Activated T-helper 2 cell treated with anti-CD3 and anti-CD28 coated beads, Interferon-gamma antibody, Interleukin-2, Interleukin-4, amounts not matched to agents 10 μg/mL and 5 μg/mL and 100 μg/mL, durations not matched to agents 14 hours and 24 hours and 36 hours (primary cell): ENCODE measurements at regions of chr22 and their contacts with region 1.

Region 1: DNA sequence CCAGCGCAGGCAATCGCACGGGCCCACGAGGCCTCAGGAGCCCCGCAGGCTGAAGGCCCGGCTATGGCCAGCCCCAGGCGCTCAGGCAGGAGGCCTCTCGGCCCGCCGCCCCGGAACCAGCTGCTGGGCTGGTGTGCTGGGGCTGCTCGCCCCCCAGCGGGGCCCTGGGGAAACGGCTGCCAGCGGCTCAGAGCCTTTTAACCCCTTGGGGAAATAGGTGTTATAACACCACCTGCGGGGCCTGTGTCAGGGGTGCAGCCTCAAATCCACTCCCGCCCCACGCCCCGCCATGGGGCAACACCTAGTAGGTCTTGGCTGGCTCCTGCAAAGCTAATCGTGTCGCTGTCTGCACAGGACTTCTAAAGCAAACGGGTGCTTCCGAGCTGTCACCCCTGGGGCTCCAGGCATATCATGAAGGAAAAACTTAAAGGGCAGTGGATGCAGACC is 237.4 kb downstream of the TTC28 start:
- DNase-seq: peak; percentile 74
- H3K4me3 Mint-ChIP-seq: peak overlapping the region; percentile 78
- H3K27ac Mint-ChIP-seq: peak overlapping the region; percentile 67
- H3K4me1 Mint-ChIP-seq: peaks cover 16% of the 10 kb centered on the region
- H3K27me3 Mint-ChIP-seq: peaks cover 22% of the 10 kb centered on the region

Region 2: GRCh38 chr22:28019881-28020871 is 422.1 kb before region 1 on chr22:
- intact Hi-C with region 1: loop called (anchors 2 kb)
- DNase-seq: peak; percentile 46
- H3K4me3 Mint-ChIP-seq: no peak overlapping the region
- H3K27ac Mint-ChIP-seq: no peak overlapping the region
- H3K4me1 Mint-ChIP-seq: no peaks in the 10 kb centered on the region
- H3K27me3 Mint-ChIP-seq: no peaks in the 10 kb centered on the region

Region 3: GRCh38 chr22:28051787-28052356 is 390.4 kb before region 1 on chr22:
- intact Hi-C with region 1: loop called (anchors 10 kb)
- DNase-seq: no peak
- H3K4me3 Mint-ChIP-seq: no peak overlapping the region
- H3K27ac Mint-ChIP-seq: no peak overlapping the region
- H3K4me1 Mint-ChIP-seq: no peaks in the 10 kb centered on the region
- H3K27me3 Mint-ChIP-seq: peaks cover 2% of the 10 kb centered on the region

Region 4: GRCh38 chr22:28231441-28231840 is 210.8 kb before region 1 on chr22:
- intact Hi-C with region 1: no loop called
- DNase-seq: no peak
- H3K4me3 Mint-ChIP-seq: no peak overlapping the region
- H3K27ac Mint-ChIP-seq: no peak overlapping the region
- H3K4me1 Mint-ChIP-seq: no peaks in the 10 kb centered on the region
- H3K27me3 Mint-ChIP-seq: peaks cover 12% of the 10 kb centered on the region

Region 5: DNA sequence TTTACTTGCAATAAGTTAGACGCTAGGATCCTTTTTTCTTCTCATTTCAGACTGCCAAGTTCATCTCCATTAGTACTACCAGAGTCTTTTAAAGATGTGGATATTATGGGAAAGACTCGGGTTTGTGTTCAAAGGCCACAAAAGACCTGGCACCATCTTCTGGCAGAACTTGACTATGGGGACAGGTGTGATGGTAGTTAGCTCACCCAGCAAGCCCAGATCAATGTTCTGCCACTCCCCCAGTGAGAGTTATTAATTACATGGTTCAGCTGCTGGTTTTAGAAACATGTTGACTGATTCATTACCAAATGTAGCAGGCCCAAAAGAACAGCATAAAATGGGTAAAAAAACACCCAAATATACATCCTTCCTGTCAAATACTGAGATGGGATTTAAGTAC is 189.7 kb before region 1 on chr22:
- intact Hi-C with region 1: loop called (anchors 2 kb)
- DNase-seq: no peak
- H3K4me3 Mint-ChIP-seq: no peak overlapping the region
- H3K27ac Mint-ChIP-seq: no peak overlapping the region
- H3K4me1 Mint-ChIP-seq: no peaks in the 10 kb centered on the region
- H3K27me3 Mint-ChIP-seq: no peaks in the 10 kb centered on the region

Region 6: GRCh38 chr22:28310299-28310698 is 132.0 kb before region 1 on chr22:
- intact Hi-C with region 1: no loop called
- DNase-seq: no peak
- H3K4me3 Mint-ChIP-seq: no peak overlapping the region
- H3K27ac Mint-ChIP-seq: no peak overlapping the region
- H3K4me1 Mint-ChIP-seq: no peaks in the 10 kb centered on the region
- H3K27me3 Mint-ChIP-seq: peaks cover 3% of the 10 kb centered on the region

Region 7: GRCh38 chr22:28373831-28374230 is 68.5 kb before region 1 on chr22:
- intact Hi-C with region 1: loop called (anchors 5 kb)
- DNase-seq: no peak
- H3K4me3 Mint-ChIP-seq: no peak overlapping the region
- H3K27ac Mint-ChIP-seq: no peak overlapping the region
- H3K4me1 Mint-ChIP-seq: peaks cover 50% of the 10 kb centered on the region
- H3K27me3 Mint-ChIP-seq: no peaks in the 10 kb centered on the region

Region 8: DNA sequence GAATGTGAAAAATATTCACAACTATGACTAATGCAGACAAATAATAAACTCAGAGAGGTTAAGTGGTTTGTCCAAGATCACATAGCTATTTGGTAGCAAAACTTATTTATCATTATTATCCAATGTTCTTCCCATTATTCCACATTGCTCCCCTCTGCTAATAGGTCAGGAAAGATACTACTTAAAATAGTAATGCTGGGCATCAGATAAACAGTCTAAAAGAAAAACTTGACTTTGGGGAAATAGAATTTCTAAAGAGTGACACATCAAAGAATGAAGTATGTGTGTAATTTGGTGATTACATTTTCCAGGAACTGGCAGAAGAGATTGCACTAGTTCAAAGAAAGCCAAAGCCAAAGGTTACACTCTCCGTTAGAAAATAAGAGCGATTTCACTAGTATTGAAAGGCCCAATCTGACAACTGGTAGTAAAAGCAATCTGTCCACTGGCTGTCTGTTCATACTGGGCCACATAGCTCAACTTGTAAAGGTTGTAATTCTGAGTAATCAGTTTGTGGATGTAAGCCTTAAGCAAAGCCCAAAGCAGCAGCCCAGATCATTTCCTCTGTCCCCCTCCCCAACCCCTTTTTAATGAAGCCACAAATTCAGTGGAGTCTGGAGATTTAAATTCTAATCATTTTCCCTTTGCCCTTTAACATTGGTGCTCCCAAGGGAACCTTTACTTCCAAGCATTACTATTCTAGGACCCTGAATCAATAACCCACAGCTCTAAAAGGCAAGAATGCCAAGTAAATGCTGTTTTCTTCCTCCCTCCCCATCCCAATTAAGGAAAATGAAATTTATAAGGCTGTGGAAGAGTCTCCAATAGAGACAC is 46.1 kb before region 1 on chr22:
- intact Hi-C with region 1: loop called (anchors 2 kb)
- DNase-seq: no peak
- H3K4me3 Mint-ChIP-seq: peak overlapping the region; percentile 14
- H3K27ac Mint-ChIP-seq: peak overlapping the region; percentile 62
- H3K4me1 Mint-ChIP-seq: peaks cover 51% of the 10 kb centered on the region
- H3K27me3 Mint-ChIP-seq: no peaks in the 10 kb centered on the region

Region 9: GRCh38 chr22:28454431-28455064 is 12.3 kb after region 1 on chr22:
- intact Hi-C with region 1: no loop called
- DNase-seq: no peak
- H3K4me3 Mint-ChIP-seq: no peak overlapping the region
- H3K27ac Mint-ChIP-seq: no peak overlapping the region
- H3K4me1 Mint-ChIP-seq: no peaks in the 10 kb centered on the region
- H3K27me3 Mint-ChIP-seq: peaks cover 17% of the 10 kb centered on the region

Region 10: DNA sequence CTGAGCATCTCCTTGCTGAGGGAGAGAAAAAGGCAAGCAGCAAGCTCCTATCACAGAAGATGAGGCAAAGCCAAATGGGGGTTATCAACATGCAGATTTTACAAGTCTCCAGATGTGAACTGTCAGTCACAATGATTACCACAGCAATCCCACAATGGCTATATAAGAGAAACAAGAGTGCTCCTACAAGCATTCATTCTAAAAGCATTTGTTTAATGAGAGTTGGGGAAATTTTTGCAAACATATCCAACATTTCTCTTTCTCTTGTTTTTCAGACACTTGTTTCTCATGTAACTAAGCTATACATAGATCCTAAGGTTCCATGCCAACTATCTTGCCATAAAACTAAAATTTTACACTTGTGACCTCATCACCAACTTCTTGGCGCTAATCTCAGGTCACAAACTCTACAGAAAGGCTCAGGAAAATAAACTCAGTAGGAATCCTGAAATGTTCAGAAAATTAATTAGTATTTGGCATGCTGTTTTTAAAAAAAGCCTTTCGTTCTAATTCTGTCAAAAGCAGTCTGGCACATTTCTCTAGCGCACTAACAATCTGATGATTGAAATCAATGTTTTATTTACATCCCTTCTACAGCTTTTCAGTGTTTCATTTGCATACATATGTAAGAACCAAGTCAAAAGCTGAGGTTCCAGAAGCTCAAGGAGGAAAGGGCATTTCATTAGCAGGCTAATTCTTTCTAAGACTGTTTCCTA is 37.9 kb after region 1 on chr22:
- intact Hi-C with region 1: no loop called
- DNase-seq: no peak
- H3K4me3 Mint-ChIP-seq: no peak overlapping the region
- H3K27ac Mint-ChIP-seq: no peak overlapping the region
- H3K4me1 Mint-ChIP-seq: no peaks in the 10 kb centered on the region
- H3K27me3 Mint-ChIP-seq: peaks cover 28% of the 10 kb centered on the region